Kidney (tissue), 22 donors: ENCODE measurements at regions of chr21 and their contacts with region 1.

Region 1: DNA sequence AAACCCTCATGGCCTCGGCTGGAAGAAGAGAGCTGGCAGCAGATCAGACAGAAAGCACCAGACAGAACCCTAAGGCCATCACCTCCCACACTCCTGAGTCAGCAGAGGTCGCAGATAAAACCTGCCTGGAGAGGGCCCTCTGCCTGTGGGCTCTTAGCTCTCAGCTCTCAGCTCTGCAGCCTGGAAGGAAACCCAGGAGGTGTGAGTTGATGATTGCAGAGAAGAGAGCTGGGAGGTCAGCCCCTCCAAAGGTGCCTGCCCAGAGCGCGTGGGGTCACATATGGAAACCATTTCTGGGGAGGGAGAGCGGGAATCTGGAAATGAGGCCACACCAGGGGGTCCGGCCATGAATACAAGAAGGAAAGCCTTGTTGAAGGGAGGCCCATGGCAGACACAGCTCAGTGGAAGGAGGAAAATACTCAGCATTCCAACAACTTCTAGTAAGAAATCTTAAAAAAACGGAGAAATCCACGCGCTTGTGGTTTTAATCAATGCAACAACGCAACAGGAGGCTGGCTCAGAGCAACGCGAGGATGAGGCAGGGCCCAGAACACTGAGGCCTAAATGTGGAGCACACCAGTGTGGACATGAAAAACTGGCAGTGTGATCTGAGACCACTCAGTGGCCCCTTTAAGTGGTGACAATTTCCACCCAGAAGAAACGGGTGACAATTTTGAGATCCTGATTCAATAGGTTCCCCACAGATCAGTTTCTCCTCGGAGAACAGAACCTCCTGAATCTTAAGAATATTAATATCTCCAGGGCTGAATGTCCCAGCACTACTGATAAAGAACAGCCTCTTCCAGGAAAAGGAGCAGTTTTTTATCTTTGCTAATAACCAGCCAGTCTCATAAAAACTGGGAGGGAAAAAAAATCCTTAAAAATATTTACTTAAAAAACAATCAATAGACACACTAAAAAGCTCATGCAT is 45.7 kb downstream of the PSMG1 start:
- DNase-seq: peak in 2 of 5 donors; percentile 30 to 38
- H3K4me3 ChIP-seq: no peak overlapping the region
- H3K27ac ChIP-seq: peak overlapping the region in 1 of 2 donors; percentile 45
- H3K4me1 ChIP-seq: no peaks in the 10 kb centered on the region
- H3K27me3 ChIP-seq: no peaks in the 10 kb centered on the region
- CTCF ChIP-seq: no peak

Region 2: DNA sequence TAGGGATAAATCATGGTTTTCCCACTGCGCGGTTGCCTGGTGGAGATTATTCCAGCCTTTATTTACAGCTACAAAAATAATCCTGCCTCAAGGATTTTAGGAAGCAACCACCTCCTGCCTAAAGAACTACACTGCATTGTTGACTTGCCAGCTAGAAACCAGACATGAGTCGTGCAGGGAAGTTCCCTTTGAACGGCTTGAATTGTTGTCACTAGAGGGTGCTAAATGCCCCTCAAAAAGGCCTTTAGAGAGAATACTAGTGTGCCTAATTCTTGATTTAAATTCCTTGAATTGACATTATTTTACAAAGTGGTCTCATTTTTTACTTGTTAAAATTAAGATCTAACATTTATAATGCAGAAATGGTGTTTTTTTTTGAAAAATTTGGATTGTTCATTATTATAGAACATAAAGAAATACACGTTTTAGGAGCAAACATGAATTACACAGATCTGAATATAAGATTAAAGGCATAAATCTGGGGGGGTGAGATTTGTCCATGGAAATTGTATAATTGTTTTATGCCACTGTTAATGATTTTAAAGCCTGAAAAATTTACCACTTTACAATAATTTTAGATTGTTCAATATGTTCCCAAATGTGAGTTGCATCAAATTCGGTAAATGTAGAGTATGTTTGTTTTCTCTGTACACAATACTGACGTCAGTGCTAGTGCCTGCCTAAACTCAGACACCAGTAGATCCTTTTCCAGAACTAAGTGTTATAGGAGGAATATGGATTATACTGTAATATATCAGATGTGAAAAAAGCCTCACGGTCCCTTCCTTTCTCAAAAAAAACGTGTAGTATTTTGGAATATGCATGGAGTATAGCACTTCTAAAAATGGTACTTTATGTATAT is 631.6 kb before region 1 on chr21:
- intact Hi-C with region 1: loop called (anchors 10 kb)
- DNase-seq: peak in 3 of 5 donors; percentile 51 to 92 (median 83)
- H3K4me3 ChIP-seq: no peak overlapping the region
- H3K27ac ChIP-seq: no peak overlapping the region
- H3K4me1 ChIP-seq: no peaks in the 10 kb centered on the region
- H3K27me3 ChIP-seq: no peaks in the 10 kb centered on the region
- CTCF ChIP-seq: peak; percentile 64

Region 3: GRCh38 chr21:38897532-38898422 is 239.7 kb before region 1 on chr21:
- intact Hi-C with region 1: no loop called
- DNase-seq: no peak
- H3K4me3 ChIP-seq: no peak overlapping the region
- H3K27ac ChIP-seq: no peak overlapping the region
- H3K4me1 ChIP-seq: no peaks in the 10 kb centered on the region
- H3K27me3 ChIP-seq: no peaks in the 10 kb centered on the region
- CTCF ChIP-seq: no peak

Region 4: GRCh38 chr21:39531832-39532231 is 394.3 kb after region 1 on chr21:
- intact Hi-C with region 1: no loop called
- DNase-seq: no peak
- H3K4me3 ChIP-seq: no peak overlapping the region
- H3K27ac ChIP-seq: no peak overlapping the region
- H3K4me1 ChIP-seq: peaks cover 0 to 3% (median 0%) of the 10 kb centered on the region in 3 donors
- H3K27me3 ChIP-seq: no peaks in the 10 kb centered on the region
- CTCF ChIP-seq: no peak